Posterior cingulate gyrus (tissue), 11 donors: ENCODE measurements at regions of chr2 and their contacts with region 1.

Region 1: GRCh38 chr2:223797811-223798721 is 39.3 kb downstream of the AP1S3 start:
- DNase-seq: peak in 1 of 10 donors; percentile 37

Region 2: DNA sequence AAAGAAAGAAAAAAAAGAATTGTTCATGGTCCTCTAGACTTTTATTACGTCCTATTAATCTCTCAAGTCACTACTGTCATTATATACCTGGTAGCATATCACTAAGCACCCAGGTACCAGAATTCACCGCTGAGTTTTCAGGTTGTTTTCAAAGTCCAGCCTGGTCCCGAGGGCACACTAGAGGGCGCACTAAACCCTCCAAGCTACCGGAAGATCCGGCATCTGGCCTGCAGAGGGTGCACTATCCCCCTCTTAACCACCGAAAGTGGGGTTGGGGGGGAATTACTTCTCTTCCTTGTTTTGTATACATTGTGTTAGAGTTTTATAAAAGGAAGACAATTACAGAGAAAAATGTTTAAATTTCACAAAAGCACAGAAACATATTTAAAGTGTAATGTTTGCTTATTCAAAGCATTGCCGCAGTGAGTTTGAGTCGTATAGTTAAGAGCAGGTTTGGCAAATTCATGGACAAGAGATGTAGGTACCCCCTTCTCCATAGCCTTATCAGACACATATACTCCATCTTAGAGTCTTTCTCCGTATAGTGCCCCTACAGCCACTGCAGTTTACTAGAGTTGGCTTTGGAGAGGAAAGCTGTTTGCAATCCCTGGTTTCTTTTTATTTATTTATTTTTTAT is 1107.4 kb before region 1 on chr2:
- intact Hi-C with region 1: loop called (anchors 5 kb)
- DNase-seq: peak; percentile 28 to 94 (median 73)

Region 3: GRCh38 chr2:222969491-222969890 is 828.6 kb before region 1 on chr2:
- intact Hi-C with region 1: loop called (anchors 1 kb)
- DNase-seq: no peak

Region 4: DNA sequence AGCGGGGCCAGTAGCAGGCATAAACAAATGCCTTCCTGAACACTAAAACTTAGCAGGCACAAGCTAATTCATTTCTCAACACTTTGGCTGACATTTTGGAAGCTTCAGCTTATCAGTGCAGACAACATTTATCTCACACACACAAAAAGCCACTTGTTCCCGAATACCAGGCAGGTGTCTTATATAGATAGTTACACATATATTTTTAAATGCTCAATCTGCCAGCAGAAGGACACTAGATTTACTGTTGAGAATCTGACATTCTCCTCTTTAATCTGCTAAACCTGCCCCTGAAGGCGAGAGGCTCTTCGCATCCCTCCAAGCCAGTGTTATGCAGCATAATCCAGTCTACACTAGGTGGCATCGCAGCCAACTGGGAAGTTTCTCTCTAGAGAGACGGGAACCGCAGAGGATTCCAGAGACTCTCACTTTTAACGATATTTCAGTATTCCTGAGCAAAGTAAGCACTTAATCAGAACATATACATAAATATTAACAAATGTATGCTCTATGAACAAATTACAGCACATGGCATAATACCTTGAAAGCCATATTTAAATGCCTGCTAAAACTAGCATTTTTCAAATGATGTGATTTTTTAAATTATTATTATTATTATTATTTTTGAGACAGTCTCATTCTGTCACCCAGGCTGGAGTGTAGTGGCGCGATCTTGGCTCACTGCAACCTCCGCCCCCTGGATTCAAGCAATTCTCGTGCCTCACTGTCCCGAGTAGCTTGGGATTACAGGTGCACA is 105.7 kb before region 1 on chr2:
- intact Hi-C with region 1: loop called (anchors 5 kb)
- DNase-seq: peak in 5 of 10 donors; percentile 17 to 54 (median 43)

Region 5: DNA sequence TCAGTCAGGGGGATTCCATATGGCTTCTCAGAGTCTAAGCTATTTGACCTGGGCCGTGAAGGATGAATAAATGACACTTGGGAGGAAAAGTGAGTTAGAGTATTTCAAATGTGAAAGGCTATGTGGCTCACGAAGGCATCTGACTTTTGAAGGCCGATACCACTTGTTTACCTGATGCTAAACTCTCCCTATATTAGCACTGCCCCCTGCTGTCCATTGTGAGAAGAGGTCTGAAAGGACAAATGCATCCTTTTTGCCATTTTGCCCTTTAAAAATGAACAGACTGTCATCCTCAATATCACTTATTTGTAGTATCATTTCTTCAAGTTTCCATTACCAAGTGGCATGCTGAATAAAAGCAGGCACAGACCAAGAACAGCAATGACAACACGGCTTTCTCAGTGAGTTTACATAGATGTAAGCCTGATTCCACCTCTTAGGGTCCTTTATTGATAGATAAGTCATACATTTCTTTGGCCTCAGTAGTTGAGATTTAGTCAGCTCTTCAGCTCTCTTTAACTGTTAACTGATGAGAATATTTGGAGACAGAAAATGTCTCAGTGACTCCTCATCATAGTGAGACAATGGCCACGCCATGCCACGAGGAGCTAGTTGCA is 1204.1 kb after region 1 on chr2:
- intact Hi-C with region 1: no loop called
- DNase-seq: peak in 2 of 10 donors; percentile 25 to 63